ENCODE measurements at regions of chr18 and their contacts with region 1.

Region 1: GRCh38 chr18:31701744-31702143 is 17.4 kb upstream of the B4GALT6 start:
- DNase-seq: no peak
- ATAC-seq: no peak
- H3K4me3 ChIP-seq: no peak overlapping the region
- H3K27ac ChIP-seq: no peak overlapping the region
- H3K4me1 ChIP-seq: no peaks in the 10 kb centered on the region
- H3K27me3 ChIP-seq: no peaks in the 10 kb centered on the region
- CTCF ChIP-seq: no peak

Region 2: GRCh38 chr18:31598021-31598805 is 103.5 kb before region 1 on chr18:
- CTCF ChIA-PET with region 1: no interaction called
- POLR2A ChIA-PET with region 1: interaction called, 10 read pairs
- intact Hi-C with region 1: no loop called
- DNase-seq: no peak
- ATAC-seq: no peak
- H3K4me3 ChIP-seq: no peak overlapping the region
- H3K27ac ChIP-seq: no peak overlapping the region
- H3K4me1 ChIP-seq: no peaks in the 10 kb centered on the region
- H3K27me3 ChIP-seq: no peaks in the 10 kb centered on the region
- CTCF ChIP-seq: no peak

Measured in PC-3 (cell line).